Left cardiac atrium (tissue), 4 donors: ENCODE measurements at regions of chr6 and their contacts with region 1.

Region 1: DNA sequence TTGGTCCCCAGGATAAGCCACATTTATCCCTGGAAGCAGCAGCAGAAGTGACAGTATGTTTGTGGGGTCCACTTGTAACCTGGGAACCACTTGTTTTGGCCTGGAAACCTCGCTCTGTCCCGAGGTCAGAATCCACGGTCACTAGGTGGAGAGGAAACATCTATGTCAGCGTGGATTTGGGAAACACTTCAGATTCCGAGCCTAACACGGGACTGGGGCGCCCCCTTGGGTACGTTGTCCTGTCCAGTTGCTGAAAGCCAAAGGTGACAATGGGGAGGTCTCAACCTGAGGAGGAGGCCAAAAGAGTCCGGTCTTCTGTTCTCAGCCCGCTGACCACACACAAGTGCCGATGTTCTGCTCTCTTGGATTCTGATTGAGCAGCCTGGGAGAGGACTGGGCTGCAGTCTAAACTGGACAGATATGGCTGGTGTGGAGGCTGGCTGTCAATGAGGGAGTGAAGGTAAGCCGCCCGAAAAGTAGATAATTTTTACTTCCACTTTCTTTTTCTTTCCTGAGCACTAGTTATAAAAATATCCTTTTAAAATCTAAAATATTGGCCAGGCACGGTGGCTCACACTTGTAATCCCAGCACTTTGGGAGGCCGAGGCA is 4.9 kb upstream of the ZFP57 start:
- DNase-seq: no peak
- ATAC-seq: peak; percentile 46 to 61

Region 2: DNA sequence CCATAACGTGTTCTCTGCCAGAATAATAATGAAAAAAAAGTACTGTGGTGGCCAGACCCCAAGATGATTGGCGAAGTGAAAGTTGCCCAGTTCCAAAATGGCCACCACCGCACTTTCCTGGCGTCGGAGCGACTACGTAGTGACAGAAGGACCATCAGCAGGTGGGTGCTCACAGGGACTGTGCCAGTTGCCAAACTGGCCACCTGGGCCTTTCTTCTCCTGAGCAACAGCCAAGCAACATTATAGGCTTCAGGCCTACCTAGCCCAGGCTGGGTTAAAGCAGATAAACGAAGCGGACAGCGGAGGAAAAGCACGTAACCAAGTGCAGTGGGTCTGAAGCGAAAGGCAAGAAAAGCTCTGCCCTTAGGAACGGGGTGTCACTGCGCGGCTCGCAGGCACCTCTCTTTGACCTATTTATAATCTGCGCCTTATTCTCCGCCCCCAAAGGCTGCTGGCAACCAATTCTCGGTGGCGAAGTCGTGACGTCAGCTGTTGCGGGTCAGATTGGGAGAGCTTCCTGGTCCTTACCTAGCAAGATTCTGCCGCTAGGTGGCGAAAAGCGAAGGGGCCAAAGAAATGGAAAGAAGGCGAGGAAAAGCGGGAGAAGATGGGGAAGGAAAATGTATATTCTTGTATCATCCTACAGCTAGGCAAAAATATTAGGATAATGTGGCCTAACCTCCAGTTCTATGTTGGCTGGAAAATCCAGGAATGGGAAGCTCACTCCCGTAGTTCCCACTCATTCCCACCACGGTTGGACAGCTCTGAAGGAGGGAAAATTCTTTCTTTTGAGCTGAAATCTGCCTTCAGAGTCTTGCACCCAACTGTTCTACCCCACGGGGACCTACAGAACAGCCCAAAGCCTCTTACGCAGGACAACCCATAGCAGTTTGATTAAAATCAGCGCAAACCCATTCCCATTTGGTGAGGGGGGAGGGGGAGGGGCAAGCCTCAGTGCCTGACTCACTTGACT is 35.8 kb before region 1 on chr6:
- intact Hi-C with region 1: loop called in 1 of 2 experiments (anchors 2 kb)
- DNase-seq: peak; percentile 99
- ATAC-seq: peak; percentile 97 to 99